Right ventricle myocardium inferior (tissue), 1 donor: ENCODE measurements at regions of chr15 and their contacts with region 1.

Region 1: GRCh38 chr15:42137431-42138261 is 18.8 kb downstream of the PLA2G4F start:
- DNase-seq: peak; percentile 30
- ATAC-seq: no peak

Region 2: GRCh38 chr15:41989259-41989933 is 148.2 kb before region 1 on chr15:
- intact Hi-C with region 1: loop called (anchors 5 kb)
- DNase-seq: peak; percentile 91
- ATAC-seq: peak; percentile 88

Region 3: DNA sequence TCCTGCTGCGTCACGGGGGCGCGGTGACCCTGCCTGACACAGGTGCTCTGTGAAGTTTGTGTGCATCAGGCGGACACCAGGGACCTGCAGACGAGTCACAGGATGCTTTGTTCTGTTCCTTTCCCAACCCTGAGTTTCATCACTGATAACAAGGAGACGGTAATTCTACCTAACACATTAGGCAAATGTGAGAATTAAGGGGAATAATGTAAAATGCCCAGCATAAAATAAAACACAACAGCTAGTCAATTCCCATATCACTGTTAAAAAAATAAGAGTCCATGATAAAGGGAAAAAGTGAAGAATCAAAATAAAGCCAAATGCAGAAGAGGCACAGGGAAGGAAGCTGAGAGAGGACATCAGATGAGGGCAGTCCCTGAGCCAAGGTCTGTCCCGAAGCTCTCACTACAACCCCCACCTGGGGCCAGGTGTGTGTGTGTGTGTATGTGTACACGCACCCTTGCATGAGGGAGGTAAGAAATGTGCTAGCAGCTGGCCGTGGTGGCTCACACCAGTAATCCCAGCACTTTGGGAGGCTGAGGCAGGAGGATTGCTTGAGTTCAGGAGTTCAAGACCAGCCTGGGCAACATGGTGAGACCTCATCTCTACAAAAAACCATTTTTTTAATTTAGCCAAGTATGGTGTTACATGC is 70.8 kb before region 1 on chr15:
- intact Hi-C with region 1: loop called (anchors 2 kb)
- DNase-seq: no peak
- ATAC-seq: no peak

Region 4: GRCh38 chr15:42207674-42208579 is 70.3 kb after region 1 on chr15 and contains the start of gene VPS39:
- intact Hi-C with region 1: no loop called
- DNase-seq: peak; percentile 92
- ATAC-seq: peak; percentile 97
- total RNA-seq, gene VPS39: 43.0 TPM